K562 (cell line): ENCODE measurements at regions of chr18 and their contacts with region 1.

Region 1: DNA sequence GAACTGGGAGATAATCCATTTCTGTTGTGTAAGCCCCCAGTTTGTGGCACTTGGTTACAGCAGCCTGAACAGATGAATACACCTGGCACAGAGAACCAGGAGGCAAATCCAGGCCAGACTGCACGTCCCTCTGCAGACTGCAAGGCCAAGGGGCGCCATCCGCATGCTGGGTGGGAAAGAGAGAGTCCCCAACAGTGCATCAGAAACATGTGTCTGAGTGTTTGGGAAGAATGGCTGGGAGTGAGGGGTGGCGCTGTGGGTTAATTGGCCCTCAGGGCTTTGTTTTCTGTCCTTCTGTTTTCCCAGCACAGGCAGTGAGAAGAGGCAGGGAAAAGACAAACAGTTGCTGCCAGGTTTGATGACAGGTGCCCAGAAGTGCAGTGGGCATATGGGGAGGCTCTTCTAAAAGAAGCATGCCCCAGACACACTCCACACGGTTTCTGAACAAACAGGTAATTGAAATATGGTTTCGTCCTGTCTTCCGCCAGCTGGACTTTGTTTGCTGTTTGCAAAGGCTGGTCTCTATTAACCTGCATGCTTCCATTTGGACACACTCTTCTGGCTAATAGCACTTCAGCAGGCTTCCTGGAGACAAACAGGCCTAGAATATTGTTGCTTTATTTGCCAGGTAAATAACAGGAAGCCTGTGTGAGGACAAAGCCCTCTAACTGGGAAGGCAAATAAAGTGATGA is 43.4 kb upstream of the SEC11C start:
- DNase-seq: no peak
- ATAC-seq: no peak
- H3K4me3 ChIP-seq: no peak overlapping the region
- H3K27ac ChIP-seq: no peak overlapping the region
- H3K4me1 ChIP-seq: no peaks in the 10 kb centered on the region; a peak in 1 of 5 replicates
- H3K27me3 ChIP-seq: no peaks in the 10 kb centered on the region; a peak in 1 of 5 replicates
- CTCF ChIP-seq: 0 out of 6 replicates have a peak, but pooled peaks of 1 of the 3 experiments have one; percentile 12
- EP300 ChIP-seq: no peak
- POLR2A ChIP-seq: no peak
- RAD21 ChIP-seq: no peak

Region 2: GRCh38 chr18:58991167-58991798 is 105.0 kb before region 1 on chr18:
- CTCF ChIA-PET with region 1: no interaction called
- POLR2A ChIA-PET with region 1: no interaction called
- in situ Hi-C with region 1: no loop called
- intact Hi-C with region 1: no loop called
- DNase-seq: no peak
- ATAC-seq: no peak
- H3K4me3 ChIP-seq: no peak overlapping the region
- H3K27ac ChIP-seq: no peak overlapping the region
- H3K4me1 ChIP-seq: no peaks in the 10 kb centered on the region
- H3K27me3 ChIP-seq: no peaks in the 10 kb centered on the region
- CTCF ChIP-seq: no peak
- EP300 ChIP-seq: no peak
- POLR2A ChIP-seq: no peak
- RAD21 ChIP-seq: no peak

Region 3: GRCh38 chr18:59109375-59109774 is 13.1 kb after region 1 on chr18:
- CTCF ChIA-PET with region 1: no interaction called
- POLR2A ChIA-PET with region 1: no interaction called
- in situ Hi-C with region 1: no loop called
- intact Hi-C with region 1: no loop called
- DNase-seq: no peak
- ATAC-seq: no peak
- H3K4me3 ChIP-seq: no peak overlapping the region
- H3K27ac ChIP-seq: no peak overlapping the region
- H3K4me1 ChIP-seq: no peaks in the 10 kb centered on the region
- H3K27me3 ChIP-seq: peaks cover 0 to 4% of the 10 kb centered on the region in 2 experiments; a peak in 1 of 5 replicates
- CTCF ChIP-seq: no peak
- EP300 ChIP-seq: no peak
- POLR2A ChIP-seq: no peak
- RAD21 ChIP-seq: no peak

Region 4: DNA sequence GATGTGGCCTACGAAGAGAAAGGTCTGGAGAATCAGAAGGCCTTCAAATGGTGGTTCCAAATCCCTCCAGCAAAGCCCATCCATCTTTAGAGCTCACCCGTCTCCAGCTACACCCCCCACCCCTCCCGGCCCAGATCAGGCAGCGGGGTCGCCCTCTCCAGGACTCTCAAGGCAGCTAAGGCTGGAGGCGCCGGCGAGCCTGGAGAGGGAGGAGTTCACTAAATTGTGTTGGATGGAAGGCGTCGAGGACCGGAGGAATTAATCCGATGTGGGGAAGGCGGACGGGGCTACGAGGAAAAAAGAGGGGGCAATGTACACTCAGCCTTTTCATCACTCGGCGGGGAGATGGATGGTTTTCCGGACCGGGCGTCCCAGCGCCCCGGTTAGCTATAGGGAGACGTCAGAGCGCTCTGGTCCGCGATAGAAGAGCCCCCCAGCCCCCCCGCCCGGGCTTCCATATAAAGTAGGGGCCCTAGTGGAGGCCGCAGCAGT is 123.5 kb after region 1 on chr18 and contains the start of gene GRP:
- CTCF ChIA-PET with region 1: no interaction called
- POLR2A ChIA-PET with region 1: no interaction called
- in situ Hi-C with region 1: no loop called
- intact Hi-C with region 1: loop called (anchors 10 kb)
- DNase-seq: no peak
- ATAC-seq: no peak
- H3K4me3 ChIP-seq: no peak within 1 kb of the TSS
- H3K27ac ChIP-seq: no peak within 1 kb of the TSS
- H3K4me1 ChIP-seq: no peaks in the 10 kb centered on the region
- H3K27me3 ChIP-seq: peaks cover 0 to 17% of the 10 kb centered on the region in 2 experiments; a peak in 2 of 5 replicates
- CTCF ChIP-seq: no peak
- EP300 ChIP-seq: no peak
- POLR2A ChIP-seq: no peak
- RAD21 ChIP-seq: no peak
- polyA plus RNA-seq, gene GRP: 0.07 TPM in 1 of 2 experiments, not detected in the other